ENCODE measurements at regions of chr6 and their contacts with region 1.

Region 1: GRCh38 chr6:47168183-47168582 is 126.1 kb upstream of the ADGRF1 start:
- DNase-seq: peak; percentile 58 to 81 (median 60)
- H3K4me3 ChIP-seq: no peak overlapping the region
- H3K4me3 Mint-ChIP-seq: no peak overlapping the region
- H3K27ac ChIP-seq: no peak overlapping the region
- H3K27ac Mint-ChIP-seq: peak overlapping the region in 5 of 7 donors; percentile 9 to 63 (median 30)
- H3K4me1 ChIP-seq: peaks cover 61 to 74% of the 10 kb centered on the region in 2 donors
- H3K4me1 Mint-ChIP-seq: peaks cover 64% of the 10 kb centered on the region
- H3K27me3 ChIP-seq: no peaks in the 10 kb centered on the region
- H3K27me3 Mint-ChIP-seq: peaks cover 0 to 3% (median 1%) of the 10 kb centered on the region in 3 donors
- CTCF ChIP-seq: no peak

Region 2: GRCh38 chr6:47209632-47210031 is 41.4 kb after region 1 on chr6:
- intact Hi-C with region 1: no loop called
- DNase-seq: no peak
- H3K4me3 ChIP-seq: no peak overlapping the region
- H3K4me3 Mint-ChIP-seq: no peak overlapping the region
- H3K27ac ChIP-seq: no peak overlapping the region
- H3K27ac Mint-ChIP-seq: no peak overlapping the region
- H3K4me1 ChIP-seq: no peaks in the 10 kb centered on the region
- H3K4me1 Mint-ChIP-seq: peaks cover 4% of the 10 kb centered on the region
- H3K27me3 ChIP-seq: no peaks in the 10 kb centered on the region
- H3K27me3 Mint-ChIP-seq: peaks cover 0 to 1% (median 0%) of the 10 kb centered on the region in 3 donors
- CTCF ChIP-seq: no peak

Region 3: DNA sequence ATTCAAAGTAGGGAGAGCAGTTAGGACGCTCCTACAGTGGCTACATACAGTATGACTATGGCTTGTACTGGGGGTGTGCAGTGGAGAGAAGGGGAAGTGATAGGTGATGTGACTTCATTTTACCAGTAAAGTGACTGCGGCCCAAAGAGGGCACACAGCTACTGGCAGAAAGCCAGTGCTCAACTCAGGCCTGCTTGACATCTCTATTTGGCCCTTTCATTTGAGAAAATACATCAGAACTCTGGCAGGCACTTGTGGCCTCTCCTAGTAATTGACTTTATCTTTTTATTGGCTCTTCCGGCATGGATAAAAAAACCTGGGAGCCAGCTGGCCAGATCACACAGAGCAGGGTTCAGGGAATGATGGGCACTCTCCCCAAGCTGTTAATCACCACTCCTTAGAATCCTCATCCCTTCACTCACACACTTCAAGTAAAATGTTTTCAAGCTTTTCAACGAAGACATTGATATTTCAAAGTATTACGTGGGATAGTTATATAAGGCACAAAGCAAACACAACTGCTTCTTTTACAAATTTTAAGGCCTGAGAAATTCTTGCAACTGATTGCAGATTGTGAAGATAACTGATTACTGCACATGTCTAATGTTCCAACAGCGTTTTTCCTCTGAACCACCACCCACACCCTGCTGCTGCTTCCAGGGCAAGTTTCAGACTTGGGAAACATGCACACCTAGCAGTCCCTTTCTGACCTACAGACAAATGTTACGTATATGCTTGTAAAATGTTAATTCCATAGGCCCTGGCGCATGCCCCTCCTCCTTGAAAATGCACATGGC is 68.0 kb after region 1 on chr6:
- intact Hi-C with region 1: loop called (anchors 5 to 10 kb)
- DNase-seq: peak; percentile 39 to 64 (median 48)
- H3K4me3 ChIP-seq: no peak overlapping the region
- H3K4me3 Mint-ChIP-seq: no peak overlapping the region
- H3K27ac ChIP-seq: peak overlapping the region in 1 of 2 donors; percentile 4
- H3K27ac Mint-ChIP-seq: peak overlapping the region; percentile 59 to 90 (median 85)
- H3K4me1 ChIP-seq: peaks cover 18 to 22% of the 10 kb centered on the region in 2 donors
- H3K4me1 Mint-ChIP-seq: peaks cover 35% of the 10 kb centered on the region
- H3K27me3 ChIP-seq: no peaks in the 10 kb centered on the region
- H3K27me3 Mint-ChIP-seq: no peaks in the 10 kb centered on the region
- CTCF ChIP-seq: no peak

Region 4: GRCh38 chr6:47242483-47243386 is 74.6 kb after region 1 on chr6:
- intact Hi-C with region 1: loop called (anchors 5 to 10 kb)
- DNase-seq: peak; percentile 95 to 98 (median 98)
- H3K4me3 ChIP-seq: peak overlapping the region in 1 of 3 experiments; percentile 53
- H3K4me3 Mint-ChIP-seq: peak overlapping the region in 1 of 2 donors; percentile 67
- H3K27ac ChIP-seq: peak overlapping the region; percentile 44 to 87
- H3K27ac Mint-ChIP-seq: peak overlapping the region; percentile 82 to 95 (median 92)
- H3K4me1 ChIP-seq: peaks cover 42 to 52% of the 10 kb centered on the region in 2 donors
- H3K4me1 Mint-ChIP-seq: peaks cover 54% of the 10 kb centered on the region
- H3K27me3 ChIP-seq: no peaks in the 10 kb centered on the region
- H3K27me3 Mint-ChIP-seq: no peaks in the 10 kb centered on the region
- CTCF ChIP-seq: no peak